ENCODE measurements at regions of chr6 and their contacts with region 1.

Region 1: DNA sequence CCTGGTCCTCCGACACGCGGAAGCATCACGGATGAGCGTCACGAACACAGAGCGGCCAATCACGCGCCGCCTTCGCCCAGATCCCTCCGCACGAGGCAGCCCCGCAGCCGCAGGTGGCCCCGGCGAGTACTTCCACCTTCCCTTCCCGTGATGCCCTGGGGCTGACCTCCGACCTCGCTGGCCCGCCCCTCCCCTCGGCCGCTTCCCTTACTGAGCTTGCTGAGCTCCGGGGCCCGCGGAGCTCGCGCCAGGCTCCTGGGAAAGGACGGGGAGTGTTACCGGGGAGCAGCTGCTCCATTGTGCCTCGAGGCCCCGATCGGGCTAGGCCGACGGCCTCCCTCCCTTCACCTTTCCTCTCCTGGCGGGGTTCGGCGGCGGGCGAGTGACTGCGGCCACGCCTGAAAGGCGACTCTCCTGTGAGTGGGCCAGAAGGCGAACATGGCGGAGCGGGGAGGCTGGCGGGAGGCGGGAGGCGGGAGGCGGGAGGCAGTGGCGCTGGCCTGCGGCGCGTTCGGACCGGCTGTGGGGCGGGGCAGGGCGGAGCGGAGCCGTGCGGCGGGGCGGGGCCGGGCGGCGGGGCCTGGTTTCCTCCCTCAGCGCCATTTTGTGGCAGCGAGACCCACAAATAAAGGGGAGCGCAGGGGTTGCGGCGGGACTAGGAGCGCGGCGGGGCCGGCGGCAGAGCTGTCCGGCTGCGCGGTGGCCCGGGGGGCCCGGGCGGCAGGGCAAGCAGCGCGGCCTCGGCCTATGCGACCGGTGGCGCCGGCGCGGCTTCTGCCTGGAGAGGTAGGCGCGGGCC is at the start of gene WTAP:
- DNase-seq: peak; percentile 98
- H3K4me3 ChIP-seq: peak within 1 kb of the TSS; percentile 79 to 98 (median 92)
- H3K27ac ChIP-seq: peak within 1 kb of the TSS; percentile 97 to 100 (median 100)
- H3K4me1 ChIP-seq: peaks cover 0 to 49% (median 44%) of the 10 kb centered on the region in 4 donors
- H3K27me3 ChIP-seq: no peaks in the 10 kb centered on the region
- CTCF ChIP-seq: no peak
- EP300 ChIP-seq: peak in 1 of 4 donors; percentile 7
- POLR2A ChIP-seq: peak; percentile 22 to 79
- total RNA-seq, gene WTAP: 64.5 to 93.8 (median 75.6) TPM

Region 2: GRCh38 chr6:159761873-159762680 is 35.0 kb after region 1 on chr6 and contains the start of gene ACAT2:
- intact Hi-C with region 1: loop called (anchors 1 kb)
- DNase-seq: peak; percentile 99
- H3K4me3 ChIP-seq: peak within 1 kb of the TSS; percentile 74 to 99 (median 92)
- H3K27ac ChIP-seq: peak within 1 kb of the TSS; percentile 98 to 100 (median 100)
- H3K4me1 ChIP-seq: peaks cover 0 to 20% (median 12%) of the 10 kb centered on the region in 4 donors
- H3K27me3 ChIP-seq: no peaks in the 10 kb centered on the region
- CTCF ChIP-seq: no peak
- EP300 ChIP-seq: no peak
- POLR2A ChIP-seq: peak in 1 of 2 donors; percentile 65
- total RNA-seq, gene ACAT2: 4.1 to 12.1 (median 5.2) TPM

Region 3: DNA sequence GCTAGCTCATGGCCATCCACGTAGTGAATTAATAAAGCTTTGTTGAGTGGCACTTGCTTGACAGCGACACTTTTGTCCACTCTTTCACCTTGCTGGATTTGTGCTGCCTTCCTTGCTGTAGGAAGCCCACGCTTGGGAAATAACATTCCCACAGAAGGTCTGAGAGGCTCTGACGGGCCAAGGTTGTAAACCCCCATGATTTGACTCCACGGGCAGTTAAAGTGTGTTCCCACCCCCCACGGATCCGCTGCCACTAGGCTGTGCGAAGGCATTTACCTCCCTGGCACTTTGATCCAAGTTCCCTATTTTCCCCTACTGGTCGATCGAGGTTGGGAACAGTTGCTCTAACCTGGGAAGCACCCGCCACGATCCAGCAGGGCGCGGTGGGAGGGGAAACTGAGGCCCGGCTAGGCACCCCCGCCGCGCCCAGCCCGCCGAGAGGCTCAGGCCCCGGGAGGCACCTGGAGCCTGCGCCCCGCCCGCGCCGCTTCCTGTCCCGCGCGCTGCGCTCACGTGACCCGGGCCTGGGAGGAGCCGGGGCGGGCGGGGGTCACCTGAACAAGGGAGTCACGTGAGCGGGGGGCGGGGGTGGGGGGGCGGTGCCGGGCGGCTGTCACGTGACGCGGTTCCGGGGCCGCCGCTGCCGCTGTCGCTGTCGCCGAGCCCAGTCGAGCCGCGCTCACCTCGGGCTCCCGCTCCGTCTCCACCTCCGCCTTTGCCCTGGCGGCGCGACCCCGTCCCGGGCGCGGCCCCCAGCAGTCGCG is 241.5 kb after region 1 on chr6 and contains the start of gene IGF2R:
- intact Hi-C with region 1: loop called (anchors 2 kb)
- DNase-seq: peak; percentile 98
- H3K4me3 ChIP-seq: peak within 1 kb of the TSS; percentile 86 to 98 (median 92)
- H3K27ac ChIP-seq: peak within 1 kb of the TSS; percentile 83 to 94 (median 89)
- H3K4me1 ChIP-seq: peaks cover 0 to 37% (median 25%) of the 10 kb centered on the region in 4 donors
- H3K27me3 ChIP-seq: no peaks in the 10 kb centered on the region
- CTCF ChIP-seq: no peak
- EP300 ChIP-seq: peak in 1 of 4 donors; percentile 17
- POLR2A ChIP-seq: peak; percentile 49 to 53
- total RNA-seq, gene IGF2R: 34.6 to 80.9 (median 42.8) TPM

Region 4: GRCh38 chr6:160795721-160796120 is 1068.6 kb after region 1 on chr6:
- intact Hi-C with region 1: no loop called
- DNase-seq: no peak
- H3K4me3 ChIP-seq: no peak overlapping the region
- H3K27ac ChIP-seq: no peak overlapping the region
- H3K4me1 ChIP-seq: peaks cover 0 to 6% (median 0%) of the 10 kb centered on the region in 4 donors
- H3K27me3 ChIP-seq: no peaks in the 10 kb centered on the region
- CTCF ChIP-seq: no peak
- EP300 ChIP-seq: no peak
- POLR2A ChIP-seq: no peak